ENCODE measurements at regions of chr2 and their contacts with region 1.

Region 1: GRCh38 chr2:203918264-203918663 is 18.3 kb upstream of the ICOS start:
- DNase-seq: no peak
- H3K4me3 ChIP-seq: no peak overlapping the region
- H3K27ac ChIP-seq: no peak overlapping the region
- H3K4me1 ChIP-seq: no peaks in the 10 kb centered on the region; a peak in 1 of 4 replicates
- H3K27me3 ChIP-seq: no peaks in the 10 kb centered on the region; the same call in 1 of the 2 replicates
- CTCF ChIP-seq: no peak
- EP300 ChIP-seq: no peak
- RAD21 ChIP-seq: no peak

Region 2: DNA sequence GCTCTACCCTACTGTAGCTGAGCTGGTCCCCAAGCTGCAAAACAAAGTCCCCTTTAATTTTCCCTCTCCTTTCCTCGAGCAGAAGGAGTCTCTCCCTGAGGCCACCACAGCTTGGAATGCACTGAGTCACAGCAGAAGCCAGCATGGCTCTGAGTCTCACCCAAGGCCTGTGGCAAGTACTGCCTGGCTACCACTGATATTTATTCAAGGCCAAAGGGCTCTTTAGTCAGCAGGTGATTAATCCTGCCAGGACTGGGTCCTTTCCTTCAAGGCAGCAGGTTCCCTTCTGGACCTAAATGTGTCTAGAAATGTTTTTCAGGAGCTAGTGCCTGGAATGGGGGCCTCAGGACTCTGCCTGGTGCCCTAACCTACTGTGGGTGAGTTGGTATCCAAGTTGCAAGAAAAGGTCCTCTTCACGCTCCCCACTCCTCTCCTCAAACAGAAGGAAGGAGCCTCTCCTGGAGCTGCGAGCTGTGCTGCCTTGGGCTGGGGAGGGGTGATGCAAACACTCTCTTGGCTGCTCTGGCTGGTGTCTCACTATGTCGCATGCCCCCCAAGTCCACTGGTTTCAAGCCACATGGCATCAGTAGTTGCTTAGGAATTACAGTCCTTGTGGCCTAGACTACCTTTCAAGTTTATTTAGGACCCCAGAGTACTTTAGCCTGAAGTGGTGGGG is 158.4 kb before region 1 on chr2:
- CTCF ChIA-PET with region 1: no interaction called
- POLR2A ChIA-PET with region 1: no interaction called
- DNase-seq: no peak
- H3K4me3 ChIP-seq: no peak overlapping the region
- H3K27ac ChIP-seq: peak overlapping the region in 1 of 2 experiments; percentile 46; a peak in 2 of 4 replicates
- H3K4me1 ChIP-seq: peaks cover 0 to 7% of the 10 kb centered on the region in 2 experiments; a peak in 1 of 4 replicates
- H3K27me3 ChIP-seq: no peaks in the 10 kb centered on the region
- CTCF ChIP-seq: no peak
- EP300 ChIP-seq: 0 out of 4 replicates have a peak, but pooled peaks of 1 of the 2 experiments have one; percentile 37
- RAD21 ChIP-seq: no peak

Region 3: DNA sequence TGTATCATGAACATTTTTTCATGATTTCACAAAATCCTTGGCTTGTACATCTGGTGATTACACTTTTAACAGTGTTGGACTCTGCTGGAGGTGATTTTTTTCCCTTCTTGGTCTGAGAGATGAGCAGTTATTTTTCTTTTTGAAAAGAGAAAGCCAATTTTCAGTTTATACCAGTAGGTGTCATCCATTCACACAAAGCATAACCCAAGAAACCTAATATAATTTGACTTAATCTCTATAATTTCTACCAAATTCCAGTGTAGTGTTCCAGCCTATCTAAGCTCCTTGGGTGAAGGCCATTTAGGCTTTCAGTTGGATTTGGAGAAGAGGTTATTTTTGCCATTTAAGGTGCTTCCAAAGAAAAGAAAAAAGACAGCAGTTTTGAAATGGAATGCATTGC is 10.6 kb after region 1 on chr2:
- CTCF ChIA-PET with region 1: interaction called, 16 read pairs
- POLR2A ChIA-PET with region 1: no interaction called
- DNase-seq: peak; percentile 20
- H3K4me3 ChIP-seq: no peak overlapping the region
- H3K27ac ChIP-seq: no peak overlapping the region
- H3K4me1 ChIP-seq: no peaks in the 10 kb centered on the region
- H3K27me3 ChIP-seq: no peaks in the 10 kb centered on the region
- CTCF ChIP-seq: peak; percentile 49
- EP300 ChIP-seq: no peak
- RAD21 ChIP-seq: peak; percentile 61

Region 4: GRCh38 chr2:204135752-204136151 is 217.5 kb after region 1 on chr2:
- CTCF ChIA-PET with region 1: no interaction called
- POLR2A ChIA-PET with region 1: no interaction called
- DNase-seq: no peak
- H3K4me3 ChIP-seq: no peak overlapping the region
- H3K27ac ChIP-seq: no peak overlapping the region
- H3K4me1 ChIP-seq: no peaks in the 10 kb centered on the region; a peak in 1 of 4 replicates
- H3K27me3 ChIP-seq: no peaks in the 10 kb centered on the region
- CTCF ChIP-seq: no peak
- EP300 ChIP-seq: no peak
- RAD21 ChIP-seq: no peak

Measured in SK-N-SH (cell line).